ENCODE measurements at regions of chr16 and their contacts with region 1.

Region 1: GRCh38 chr16:88662843-88663606 is at the start of gene MVD:
- DNase-seq: peak; percentile 100
- ATAC-seq: peak; percentile 99
- H3K4me3 ChIP-seq: peak within 1 kb of the TSS; percentile 92
- H3K27ac ChIP-seq: peak within 1 kb of the TSS; percentile 88
- H3K4me1 ChIP-seq: peaks cover 17 to 71% of the 10 kb centered on the region in 2 experiments
- H3K27me3 ChIP-seq: no peaks in the 10 kb centered on the region
- CTCF ChIP-seq: peak in 1 of 3 experiments; percentile 21; a peak in 1 of 6 replicates
- EP300 ChIP-seq: no peak
- POLR2A ChIP-seq: peak; percentile 92
- RAD21 ChIP-seq: peak in 1 of 2 experiments; percentile 11; a peak in 1 of 4 replicates
- polyA plus RNA-seq, gene MVD: 12.2 to 15.4 TPM

Region 2: DNA sequence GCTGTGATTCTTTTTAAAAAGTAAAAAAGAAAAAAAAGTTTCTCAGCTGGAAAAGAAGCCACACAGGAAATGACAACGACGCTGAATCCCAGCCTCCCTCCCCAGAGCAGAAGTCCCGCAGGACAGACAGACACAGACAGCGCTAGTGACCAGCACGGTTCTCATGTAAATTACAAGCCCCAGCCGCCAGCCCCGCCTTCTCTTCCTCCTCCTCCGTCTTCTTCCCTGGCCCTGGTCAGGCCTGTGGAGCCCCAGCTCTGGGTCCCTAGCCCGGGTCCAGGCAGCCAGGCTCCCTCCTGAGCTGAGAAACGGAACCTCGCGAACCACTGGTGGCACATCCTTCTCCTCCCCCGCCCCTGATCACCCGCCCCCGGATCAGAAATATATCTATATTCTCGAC is 31.6 kb before region 1 on chr16:
- CTCF ChIA-PET with region 1: no interaction called
- POLR2A ChIA-PET with region 1: no interaction called
- in situ Hi-C with region 1: no loop called
- intact Hi-C with region 1: no loop called
- DNase-seq: no peak
- ATAC-seq: no peak
- H3K4me3 ChIP-seq: no peak overlapping the region
- H3K27ac ChIP-seq: no peak overlapping the region
- H3K4me1 ChIP-seq: peaks cover 25 to 66% of the 10 kb centered on the region in 2 experiments
- H3K27me3 ChIP-seq: no peaks in the 10 kb centered on the region
- CTCF ChIP-seq: no peak
- EP300 ChIP-seq: no peak
- POLR2A ChIP-seq: no peak
- RAD21 ChIP-seq: no peak

Region 3: GRCh38 chr16:88678224-88678979 is 15.4 kb after region 1 on chr16:
- CTCF ChIA-PET with region 1: no interaction called
- POLR2A ChIA-PET with region 1: interaction called, 10 read pairs
- in situ Hi-C with region 1: no loop called
- intact Hi-C with region 1: no loop called
- DNase-seq: no peak
- ATAC-seq: no peak
- H3K4me3 ChIP-seq: no peak overlapping the region
- H3K27ac ChIP-seq: no peak overlapping the region
- H3K4me1 ChIP-seq: peaks cover 0 to 40% of the 10 kb centered on the region in 2 experiments; a peak in 2 of 5 replicates
- H3K27me3 ChIP-seq: no peaks in the 10 kb centered on the region
- CTCF ChIP-seq: no peak
- EP300 ChIP-seq: no peak
- POLR2A ChIP-seq: no peak
- RAD21 ChIP-seq: no peak

Region 4: DNA sequence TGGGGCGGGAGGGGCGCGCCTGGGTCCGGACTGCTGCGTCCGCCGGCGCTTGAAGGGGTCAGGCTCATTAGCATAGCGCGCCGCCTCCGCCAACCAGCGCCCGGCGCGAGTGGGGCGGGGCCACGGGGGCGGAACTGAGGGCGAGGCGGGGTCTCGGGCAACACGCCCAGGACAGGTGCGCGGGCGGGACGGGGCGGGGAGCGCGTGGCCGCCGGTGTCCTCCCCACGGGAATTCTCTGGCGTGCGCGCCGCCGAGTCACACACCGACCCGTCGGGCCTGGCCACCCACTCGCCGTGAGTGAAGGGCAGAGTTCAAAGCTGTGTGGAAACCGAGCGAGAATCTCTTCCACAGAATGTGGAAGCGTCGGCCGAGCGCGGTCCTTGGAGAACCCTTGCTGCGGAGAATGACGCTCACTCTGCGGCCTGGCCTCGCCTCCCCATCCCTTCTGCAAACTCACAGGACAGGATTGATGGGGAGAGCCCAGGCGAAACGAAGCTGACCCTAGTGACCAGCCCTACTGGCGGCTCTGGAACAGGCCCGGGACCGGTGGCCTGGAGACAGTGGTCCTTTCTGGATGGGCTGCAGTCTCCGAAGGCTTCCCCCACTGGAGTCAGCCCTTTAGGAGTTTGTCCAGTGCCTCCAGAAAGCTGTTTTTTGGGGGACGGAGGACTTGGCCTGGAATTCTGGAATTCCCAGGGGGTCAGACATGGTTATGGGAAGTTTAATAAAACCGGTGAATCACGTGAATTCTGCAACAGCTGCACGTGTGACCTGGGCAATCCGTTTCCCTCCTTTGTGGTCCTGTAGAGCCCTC is 23.6 kb after region 1 on chr16 and contains the start of gene SNAI3:
- CTCF ChIA-PET with region 1: no interaction called
- POLR2A ChIA-PET with region 1: interaction called, 6 read pairs
- in situ Hi-C with region 1: no loop called
- intact Hi-C with region 1: loop called (anchors 2 kb)
- DNase-seq: peak; percentile 97 to 98 (median 98)
- ATAC-seq: peak; percentile 94
- H3K4me3 ChIP-seq: peak within 1 kb of the TSS; percentile 60
- H3K27ac ChIP-seq: peak within 1 kb of the TSS; percentile 44; the same call in 2 of the 3 replicates
- H3K4me1 ChIP-seq: peaks cover 38 to 75% of the 10 kb centered on the region in 2 experiments
- H3K27me3 ChIP-seq: no peaks in the 10 kb centered on the region
- CTCF ChIP-seq: no peak
- EP300 ChIP-seq: no peak
- POLR2A ChIP-seq: peak; percentile 74
- RAD21 ChIP-seq: no peak
- polyA plus RNA-seq, gene SNAI3: 0.04 TPM in 1 of 2 experiments, not detected in the other

Region 5: GRCh38 chr16:88706288-88706964 is 43.4 kb after region 1 on chr16 and contains the starts of genes CTU2 and RNF166:
- CTCF ChIA-PET with region 1: interaction called, 3 read pairs
- POLR2A ChIA-PET with region 1: no interaction called
- in situ Hi-C with region 1: no loop called
- intact Hi-C with region 1: loop called (anchors 5 kb)
- DNase-seq: peak; percentile 96 to 97 (median 97)
- ATAC-seq: peak; percentile 86
- H3K4me3 ChIP-seq: peak within 1 kb of the TSS; percentile 98
- H3K27ac ChIP-seq: peak within 1 kb of the TSS; percentile 70
- H3K4me1 ChIP-seq: peaks cover 12 to 77% of the 10 kb centered on the region in 2 experiments
- H3K27me3 ChIP-seq: no peaks in the 10 kb centered on the region
- CTCF ChIP-seq: peak in 2 of 3 experiments; percentile 3 to 40; a peak in 1 of 6 replicates
- EP300 ChIP-seq: peak; percentile 48
- POLR2A ChIP-seq: no peak; the same call in 1 of the 2 replicates
- RAD21 ChIP-seq: no peak
- polyA plus RNA-seq, gene CTU2: 1.3 to 3.0 TPM
- polyA plus RNA-seq, gene RNF166: 0.56 to 0.96 TPM

Region 6: GRCh38 chr16:88768080-88768752 is 105.2 kb after region 1 on chr16:
- CTCF ChIA-PET with region 1: no interaction called
- POLR2A ChIA-PET with region 1: no interaction called
- in situ Hi-C with region 1: no loop called
- intact Hi-C with region 1: no loop called
- DNase-seq: peak; percentile 59 to 79 (median 66)
- ATAC-seq: no peak
- H3K4me3 ChIP-seq: no peak overlapping the region; the same call in 1 of the 2 replicates
- H3K27ac ChIP-seq: peak overlapping the region; percentile 62
- H3K4me1 ChIP-seq: peaks cover 65 to 99% of the 10 kb centered on the region in 2 experiments
- H3K27me3 ChIP-seq: no peaks in the 10 kb centered on the region
- CTCF ChIP-seq: no peak
- EP300 ChIP-seq: peak; percentile 40; the same call in 1 of the 2 replicates
- POLR2A ChIP-seq: no peak; the same call in 1 of the 2 replicates
- RAD21 ChIP-seq: peak in 1 of 2 experiments; percentile 11; a peak in 1 of 4 replicates